ENCODE measurements at regions of chr22 and their contacts with region 1.

Region 1: DNA sequence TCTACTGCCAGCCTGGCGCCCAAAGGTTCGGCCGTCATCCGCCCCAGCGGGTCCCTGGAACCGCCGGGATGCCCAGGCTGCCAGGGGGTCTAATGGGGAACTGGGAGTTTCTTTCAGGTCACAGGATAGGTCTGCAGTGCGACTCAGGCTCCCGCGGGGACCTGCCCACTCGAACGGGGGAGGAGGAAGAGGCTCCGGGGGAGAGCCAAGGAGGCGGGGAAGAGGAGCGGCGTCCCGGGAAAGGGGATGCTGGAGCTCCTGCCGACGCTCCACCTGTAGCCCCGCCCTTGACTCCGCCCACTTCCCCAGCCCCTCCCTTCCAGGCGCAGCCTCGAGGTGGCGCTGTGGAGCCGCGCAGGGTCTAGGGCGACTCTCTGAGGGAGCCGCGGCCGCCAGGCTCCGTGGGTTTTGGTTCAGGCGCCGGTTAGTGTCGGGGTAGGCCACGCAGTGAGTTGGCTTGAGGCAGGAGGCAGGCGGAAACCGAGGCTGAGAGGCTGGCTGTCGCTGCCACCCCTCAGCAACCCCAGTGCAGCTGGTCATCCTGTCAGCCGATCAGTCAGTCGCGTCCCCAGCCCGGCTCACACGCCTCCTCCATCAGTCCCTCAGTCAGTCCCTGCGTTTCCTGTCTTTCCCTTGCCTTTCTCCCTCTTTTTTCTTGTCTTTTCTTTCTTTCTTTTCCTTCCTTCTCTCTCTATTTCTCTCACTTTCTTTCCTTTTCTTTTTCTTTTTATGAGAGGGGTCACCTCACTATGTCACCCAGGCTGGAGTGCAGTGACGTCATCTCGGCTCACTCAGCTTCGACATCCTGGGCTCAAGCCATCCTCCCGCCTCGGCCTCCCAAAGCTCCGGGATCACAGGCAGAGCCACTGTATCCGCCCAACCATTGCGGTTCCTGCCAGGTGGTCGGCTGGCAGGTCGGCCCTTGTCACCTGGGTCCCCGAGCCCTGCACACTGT is 26.4 kb downstream of the YWHAH start:
- DNase-seq: peak; percentile 79 to 94
- H3K4me3 ChIP-seq: peak overlapping the region; percentile 67
- H3K4me3 Mint-ChIP-seq: peak overlapping the region; percentile 93
- H3K27ac Mint-ChIP-seq: peak overlapping the region; percentile 81
- H3K4me1 ChIP-seq: no peaks in the 10 kb centered on the region
- H3K4me1 Mint-ChIP-seq: peaks cover 7% of the 10 kb centered on the region
- H3K27me3 ChIP-seq: no peaks in the 10 kb centered on the region
- H3K27me3 Mint-ChIP-seq: no peaks in the 10 kb centered on the region
- CTCF ChIP-seq: peak; percentile 79 to 94

Region 2: GRCh38 chr22:31561238-31561887 is 409.4 kb before region 1 on chr22:
- CTCF ChIA-PET with region 1: interaction called, 9 read pairs
- POLR2A ChIA-PET with region 1: no interaction called
- intact Hi-C with region 1: loop called (anchors 1 kb)
- DNase-seq: peak; percentile 86 to 89
- H3K4me3 ChIP-seq: no peak overlapping the region
- H3K4me3 Mint-ChIP-seq: no peak overlapping the region
- H3K27ac Mint-ChIP-seq: no peak overlapping the region
- H3K4me1 ChIP-seq: 0 out of 2 replicates have a peak, but pooled peaks cover 3% of the 10 kb centered on the region
- H3K4me1 Mint-ChIP-seq: peaks cover 7% of the 10 kb centered on the region
- H3K27me3 ChIP-seq: no peaks in the 10 kb centered on the region
- H3K27me3 Mint-ChIP-seq: no peaks in the 10 kb centered on the region
- CTCF ChIP-seq: peak; percentile 77 to 91

Region 3: GRCh38 chr22:31661851-31662656 is 308.7 kb before region 1 on chr22 and contains the start of gene PISD:
- CTCF ChIA-PET with region 1: interaction called, 33 read pairs
- POLR2A ChIA-PET with region 1: interaction called, 7 read pairs
- intact Hi-C with region 1: loop called (anchors 1 kb)
- DNase-seq: peak; percentile 96 to 97
- H3K4me3 ChIP-seq: peak within 1 kb of the TSS; percentile 71
- H3K4me3 Mint-ChIP-seq: peak within 1 kb of the TSS; percentile 97
- H3K27ac Mint-ChIP-seq: peak within 1 kb of the TSS; percentile 99
- H3K4me1 ChIP-seq: peaks cover 13% of the 10 kb centered on the region; the same call in 1 of the 2 replicates
- H3K4me1 Mint-ChIP-seq: peaks cover 20% of the 10 kb centered on the region
- H3K27me3 ChIP-seq: no peaks in the 10 kb centered on the region
- H3K27me3 Mint-ChIP-seq: no peaks in the 10 kb centered on the region
- CTCF ChIP-seq: no peak
- total RNA-seq, gene PISD: 56.7 and 58.7 TPM in 2 replicates

Region 4: GRCh38 chr22:31749636-31750364 is 221.0 kb before region 1 on chr22 and contains the start of gene PRR14L:
- CTCF ChIA-PET with region 1: interaction called, 9 read pairs
- POLR2A ChIA-PET with region 1: interaction called, 3 read pairs
- intact Hi-C with region 1: loop called (anchors 1 kb)
- DNase-seq: peak; percentile 96 to 98
- H3K4me3 ChIP-seq: peak within 1 kb of the TSS; percentile 54
- H3K4me3 Mint-ChIP-seq: peak within 1 kb of the TSS; percentile 81
- H3K27ac Mint-ChIP-seq: peak within 1 kb of the TSS; percentile 87
- H3K4me1 ChIP-seq: peaks cover 35% of the 10 kb centered on the region
- H3K4me1 Mint-ChIP-seq: peaks cover 13% of the 10 kb centered on the region
- H3K27me3 ChIP-seq: no peaks in the 10 kb centered on the region
- H3K27me3 Mint-ChIP-seq: no peaks in the 10 kb centered on the region
- CTCF ChIP-seq: peak in 1 of 2 experiments; percentile 21
- total RNA-seq, gene PRR14L: 41.6 and 42.5 TPM in 2 replicates

Region 5: DNA sequence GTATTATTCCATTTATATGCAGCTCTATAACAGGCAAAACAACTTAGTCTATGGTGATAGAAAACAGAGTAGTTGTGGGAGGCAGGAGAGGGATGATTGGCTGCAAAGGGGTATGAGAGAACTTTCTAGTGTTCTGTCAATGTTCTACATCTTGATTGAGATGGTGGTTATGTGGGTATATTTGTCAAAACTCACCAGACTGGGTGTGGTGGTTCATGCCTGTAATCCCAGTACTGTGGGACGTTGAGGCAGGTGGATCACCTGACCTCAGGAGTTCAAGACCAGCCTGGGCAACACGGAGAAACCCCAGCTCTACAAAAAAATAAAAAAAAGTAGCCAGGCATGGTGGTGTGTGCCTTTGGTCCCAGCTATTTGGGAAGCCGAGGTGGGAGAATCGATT is 55.1 kb after region 1 on chr22:
- CTCF ChIA-PET with region 1: no interaction called
- POLR2A ChIA-PET with region 1: no interaction called
- intact Hi-C with region 1: no loop called
- DNase-seq: no peak
- H3K4me3 ChIP-seq: no peak overlapping the region
- H3K4me3 Mint-ChIP-seq: no peak overlapping the region
- H3K27ac Mint-ChIP-seq: no peak overlapping the region
- H3K4me1 ChIP-seq: no peaks in the 10 kb centered on the region
- H3K4me1 Mint-ChIP-seq: no peaks in the 10 kb centered on the region
- H3K27me3 ChIP-seq: no peaks in the 10 kb centered on the region
- H3K27me3 Mint-ChIP-seq: no peaks in the 10 kb centered on the region
- CTCF ChIP-seq: no peak

Region 6: GRCh38 chr22:32080904-32081303 is 110.1 kb after region 1 on chr22:
- CTCF ChIA-PET with region 1: interaction called, 13 read pairs
- POLR2A ChIA-PET with region 1: no interaction called
- intact Hi-C with region 1: no loop called
- DNase-seq: peak in 1 of 2 experiments; percentile 43
- H3K4me3 ChIP-seq: no peak overlapping the region
- H3K4me3 Mint-ChIP-seq: no peak overlapping the region
- H3K27ac Mint-ChIP-seq: no peak overlapping the region
- H3K4me1 ChIP-seq: peaks cover 32% of the 10 kb centered on the region
- H3K4me1 Mint-ChIP-seq: peaks cover 6% of the 10 kb centered on the region
- H3K27me3 ChIP-seq: no peaks in the 10 kb centered on the region
- H3K27me3 Mint-ChIP-seq: no peaks in the 10 kb centered on the region
- CTCF ChIP-seq: peak; percentile 66 to 70

Measured in Caco-2 (cell line).